ENCODE measurements at regions of chr6 and their contacts with region 1.

Region 1: DNA sequence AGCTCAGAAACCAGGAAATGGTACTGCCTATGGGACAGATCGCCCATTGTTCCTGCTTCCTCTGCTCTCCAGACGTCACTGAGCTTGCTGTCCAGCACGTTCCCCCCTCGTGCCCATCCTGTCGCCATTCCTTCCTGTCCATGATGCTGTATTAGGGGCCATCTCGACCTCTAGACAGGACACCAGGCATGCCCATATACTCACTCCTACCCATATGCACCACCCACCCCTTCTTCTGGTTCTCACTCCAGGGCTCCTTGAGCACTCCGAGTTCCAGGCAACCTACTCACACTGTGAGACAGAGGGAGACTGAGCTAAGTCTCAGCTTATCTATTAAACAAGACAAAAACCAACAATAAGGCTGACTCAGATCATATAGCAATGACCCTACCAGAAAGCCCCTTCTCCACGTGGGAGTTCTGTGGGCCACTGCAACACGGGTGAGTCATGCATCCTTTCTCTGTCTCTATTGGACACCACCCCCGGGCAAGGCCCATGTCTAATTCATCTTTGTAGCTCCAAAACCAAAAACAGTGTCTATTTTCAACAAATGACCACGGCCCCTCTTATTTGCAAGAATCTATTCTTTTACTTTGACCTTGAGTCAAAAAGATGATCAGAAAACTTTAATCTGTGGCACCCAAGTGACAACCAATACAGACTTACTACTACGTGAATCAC is 65.7 kb downstream of the PSMG4 start:
- DNase-seq: peak; percentile 53
- ATAC-seq: peak; percentile 67

Region 2: DNA sequence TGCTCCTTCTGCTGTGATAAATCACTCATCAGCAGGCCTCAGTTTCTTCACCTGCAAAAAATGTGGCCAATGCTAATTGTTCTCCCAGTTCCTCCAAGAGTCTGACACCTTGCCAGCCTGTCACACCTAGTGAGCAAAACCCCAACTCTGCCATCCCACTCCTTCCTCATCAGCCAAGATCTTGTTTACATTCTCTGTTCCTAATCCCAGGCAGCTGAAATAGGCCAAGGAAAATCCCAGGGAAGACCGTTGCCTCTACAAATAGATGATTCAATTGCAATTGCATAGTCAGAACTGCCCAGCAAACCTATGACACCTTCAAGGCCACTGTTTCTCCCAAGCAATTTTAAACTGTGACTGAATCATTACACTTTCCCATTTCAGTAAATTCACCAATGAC is 1157.7 kb before region 1 on chr6:
- intact Hi-C with region 1: no loop called
- DNase-seq: no peak
- ATAC-seq: no peak

Region 3: DNA sequence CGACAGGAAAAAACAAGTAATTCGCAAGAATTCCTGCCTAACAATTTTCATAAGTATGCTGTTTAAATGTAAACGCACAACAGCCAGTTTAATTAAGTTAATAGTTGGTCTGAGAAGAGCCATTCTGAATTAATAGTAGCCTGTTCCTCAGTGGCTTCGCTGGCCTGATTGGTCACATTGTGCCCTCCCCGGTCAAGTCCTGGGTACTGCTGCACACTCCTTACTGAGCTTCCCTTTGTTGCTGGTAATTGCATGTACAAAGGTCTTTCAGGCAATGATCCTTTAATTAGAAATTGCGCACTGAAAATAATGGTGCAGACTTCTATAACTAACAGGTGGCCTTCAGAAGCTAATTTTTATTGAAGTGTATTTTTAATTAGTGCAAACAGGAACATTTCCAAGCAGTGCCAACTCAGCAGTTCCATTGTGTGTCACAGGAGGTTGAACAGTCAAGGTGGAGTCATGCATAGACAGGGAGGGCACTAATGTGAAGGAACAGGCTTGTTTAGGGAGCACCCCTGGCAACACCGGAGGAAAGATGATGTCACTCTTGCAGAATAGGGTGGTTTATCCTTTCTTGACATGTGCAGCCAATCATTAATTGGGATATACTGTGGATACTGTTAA is 225.0 kb after region 1 on chr6:
- intact Hi-C with region 1: loop called (anchors 5 kb)
- DNase-seq: no peak
- ATAC-seq: no peak